H1 (cell line): ENCODE measurements at regions of chr19 and their contacts with region 1.

Region 1: GRCh38 chr19:53982611-53983010 is 8.8 kb upstream of the CACNG6 start:
- DNase-seq: peak in 1 of 2 experiments; percentile 66
- H3K4me3 ChIP-seq: peak overlapping the region in 2 of 4 experiments; percentile 18 to 35; a peak in 3 of 8 replicates
- H3K27ac ChIP-seq: no peak overlapping the region
- H3K4me1 ChIP-seq: peaks cover 4 to 13% (median 9%) of the 10 kb centered on the region in 4 experiments
- H3K27me3 ChIP-seq: peaks cover 0 to 5% (median 2%) of the 10 kb centered on the region in 4 experiments; a peak in 3 of 7 replicates
- CTCF ChIP-seq: no peak
- EP300 ChIP-seq: no peak
- POLR2A ChIP-seq: no peak
- RAD21 ChIP-seq: no peak

Region 2: GRCh38 chr19:53906211-53907192 is 76.1 kb before region 1 on chr19:
- CTCF ChIA-PET with region 1: interaction called, 4 read pairs
- POLR2A ChIA-PET with region 1: interaction called, 17 read pairs
- DNase-seq: peak in 1 of 2 experiments; percentile 97
- H3K4me3 ChIP-seq: peak overlapping the region; percentile 34 to 72 (median 44)
- H3K27ac ChIP-seq: no peak overlapping the region
- H3K4me1 ChIP-seq: peaks cover 0 to 14% (median 4%) of the 10 kb centered on the region in 4 experiments; a peak in 5 of 7 replicates
- H3K27me3 ChIP-seq: peaks cover 0 to 22% (median 14%) of the 10 kb centered on the region in 4 experiments; a peak in 5 of 7 replicates
- CTCF ChIP-seq: peak; percentile 72 to 97 (median 82)
- EP300 ChIP-seq: no peak
- POLR2A ChIP-seq: no peak
- RAD21 ChIP-seq: peak; percentile 68 to 75

Region 3: DNA sequence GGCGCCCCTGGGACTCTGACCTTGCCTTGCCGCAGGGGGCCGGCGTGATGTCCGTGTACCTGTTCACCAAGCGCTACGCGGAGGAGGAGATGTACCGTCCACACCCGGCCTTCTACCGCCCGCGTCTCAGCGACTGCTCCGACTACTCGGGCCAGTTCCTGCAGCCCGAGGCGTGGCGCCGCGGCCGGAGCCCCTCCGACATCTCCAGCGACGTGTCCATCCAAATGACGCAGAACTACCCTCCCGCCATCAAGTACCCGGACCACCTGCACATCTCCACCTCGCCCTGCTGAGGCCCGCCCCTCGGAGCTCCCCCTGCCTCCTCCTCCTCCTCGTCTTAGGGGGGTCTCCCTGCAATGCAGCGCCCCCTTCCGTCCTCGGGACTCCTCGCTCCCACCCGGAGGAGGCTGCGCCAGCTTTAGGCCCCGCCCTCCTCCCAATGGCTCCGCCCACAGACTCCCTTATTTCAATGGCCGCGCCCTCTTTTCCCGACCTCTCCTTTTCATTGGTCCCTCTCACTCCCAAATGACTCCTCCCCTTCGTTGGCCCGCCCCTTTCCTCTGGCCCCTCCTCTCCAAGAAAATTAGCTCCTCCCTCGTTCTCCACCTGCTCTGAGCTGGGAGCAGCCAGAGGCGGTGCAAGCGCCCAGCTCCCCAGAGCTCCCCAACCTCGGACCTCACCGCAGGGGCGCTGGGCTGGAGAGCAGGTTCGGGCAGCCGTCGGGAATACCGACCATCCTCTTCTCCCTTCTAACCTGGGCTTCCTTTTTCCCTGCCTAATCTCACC is 40.4 kb before region 1 on chr19:
- CTCF ChIA-PET with region 1: interaction called, 8 read pairs
- POLR2A ChIA-PET with region 1: interaction called, 15 read pairs
- DNase-seq: peak; percentile 97 to 100
- H3K4me3 ChIP-seq: peak overlapping the region; percentile 76 to 95 (median 88)
- H3K27ac ChIP-seq: peak overlapping the region; percentile 63; the same call in 1 of the 2 replicates
- H3K4me1 ChIP-seq: peaks cover 4 to 10% (median 7%) of the 10 kb centered on the region in 4 experiments; a peak in 6 of 7 replicates
- H3K27me3 ChIP-seq: no peaks in the 10 kb centered on the region
- CTCF ChIP-seq: peak; percentile 60 to 86 (median 82)
- EP300 ChIP-seq: no peak
- POLR2A ChIP-seq: peak; percentile 55 to 88
- RAD21 ChIP-seq: peak; percentile 46 to 65

Region 4: DNA sequence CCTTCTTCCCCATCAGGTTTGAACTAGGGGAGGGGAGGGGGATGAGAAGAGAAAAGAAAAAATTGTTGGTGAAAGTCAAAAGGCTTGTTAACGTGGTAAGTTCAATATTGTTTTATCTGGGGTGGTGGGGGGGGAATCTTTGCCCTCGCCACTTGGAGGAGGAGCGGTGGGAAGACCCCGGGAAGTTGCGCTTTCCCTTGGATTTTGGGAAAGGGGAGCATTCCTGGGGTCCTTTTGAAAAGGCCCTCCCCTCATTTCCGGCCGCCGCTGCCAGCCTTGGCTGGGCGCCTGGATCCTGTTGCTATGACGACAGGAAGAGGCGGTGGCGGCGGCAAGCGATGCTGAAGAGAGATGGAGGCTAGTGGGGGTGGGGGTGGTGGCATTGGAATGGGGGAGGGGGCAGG is 24.4 kb before region 1 on chr19:
- CTCF ChIA-PET with region 1: interaction called, 7 read pairs
- POLR2A ChIA-PET with region 1: interaction called, 41 read pairs
- DNase-seq: peak in 1 of 2 experiments; percentile 83
- H3K4me3 ChIP-seq: peak overlapping the region; percentile 17 to 61 (median 34); a peak in 7 of 8 replicates
- H3K27ac ChIP-seq: peak overlapping the region; percentile 83
- H3K4me1 ChIP-seq: peaks cover 7 to 20% (median 16%) of the 10 kb centered on the region in 4 experiments
- H3K27me3 ChIP-seq: peaks cover 0 to 3% (median 1%) of the 10 kb centered on the region in 4 experiments; a peak in 2 of 7 replicates
- CTCF ChIP-seq: no peak
- EP300 ChIP-seq: no peak
- POLR2A ChIP-seq: no peak
- RAD21 ChIP-seq: no peak

Region 5: GRCh38 chr19:53971673-53972072 is 10.9 kb before region 1 on chr19:
- CTCF ChIA-PET with region 1: interaction called, 4 read pairs
- POLR2A ChIA-PET with region 1: interaction called, 11 read pairs
- DNase-seq: no peak
- H3K4me3 ChIP-seq: no peak overlapping the region
- H3K27ac ChIP-seq: no peak overlapping the region
- H3K4me1 ChIP-seq: no peaks in the 10 kb centered on the region
- H3K27me3 ChIP-seq: no peaks in the 10 kb centered on the region
- CTCF ChIP-seq: no peak
- EP300 ChIP-seq: no peak
- POLR2A ChIP-seq: no peak
- RAD21 ChIP-seq: no peak

Region 6: DNA sequence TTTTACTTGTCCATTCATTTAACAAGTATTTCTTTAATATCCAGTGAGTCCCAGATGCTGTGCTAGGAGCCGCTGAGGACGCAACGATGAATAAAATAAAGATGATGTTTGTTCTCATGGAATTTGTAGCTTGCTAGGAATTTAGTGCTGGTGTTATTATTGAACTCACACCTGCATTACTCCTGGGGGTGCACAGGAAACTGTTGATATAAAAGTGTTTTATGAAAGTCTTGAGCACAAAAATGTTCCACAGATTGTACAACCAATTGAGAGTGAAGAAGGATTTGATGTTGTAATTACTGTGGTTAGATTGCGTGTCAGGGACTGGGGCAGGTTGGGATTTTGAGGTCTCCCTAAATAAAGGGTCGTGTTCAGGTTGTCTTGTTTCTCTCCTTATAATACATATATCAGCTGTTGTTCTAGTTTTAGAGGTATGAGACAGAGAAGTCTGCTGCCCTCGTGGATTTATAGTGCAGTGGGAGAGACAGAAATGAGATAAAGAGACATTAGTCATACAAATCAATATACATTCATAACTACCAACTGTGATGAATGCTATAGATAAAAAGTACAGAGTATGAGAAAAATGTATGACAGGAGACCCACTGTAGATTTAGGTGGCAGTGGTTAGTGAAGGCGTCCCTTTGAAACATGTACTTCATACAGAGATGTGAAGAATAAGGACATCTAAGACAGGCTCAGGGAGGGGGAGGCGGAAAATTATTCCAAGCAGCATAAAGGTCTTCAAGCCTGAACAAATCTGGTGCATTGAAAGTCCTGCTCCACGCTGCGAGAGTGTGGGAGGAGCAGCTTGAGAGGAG is 20.1 kb after region 1 on chr19:
- CTCF ChIA-PET with region 1: interaction called, 4 read pairs
- POLR2A ChIA-PET with region 1: interaction called, 13 read pairs
- DNase-seq: no peak
- H3K4me3 ChIP-seq: no peak overlapping the region
- H3K27ac ChIP-seq: no peak overlapping the region
- H3K4me1 ChIP-seq: peaks cover 0 to 6% (median 0%) of the 10 kb centered on the region in 4 experiments; a peak in 2 of 7 replicates
- H3K27me3 ChIP-seq: peaks cover 0 to 12% (median 3%) of the 10 kb centered on the region in 4 experiments; a peak in 4 of 7 replicates
- CTCF ChIP-seq: no peak
- EP300 ChIP-seq: no peak
- POLR2A ChIP-seq: no peak
- RAD21 ChIP-seq: no peak

Region 7: DNA sequence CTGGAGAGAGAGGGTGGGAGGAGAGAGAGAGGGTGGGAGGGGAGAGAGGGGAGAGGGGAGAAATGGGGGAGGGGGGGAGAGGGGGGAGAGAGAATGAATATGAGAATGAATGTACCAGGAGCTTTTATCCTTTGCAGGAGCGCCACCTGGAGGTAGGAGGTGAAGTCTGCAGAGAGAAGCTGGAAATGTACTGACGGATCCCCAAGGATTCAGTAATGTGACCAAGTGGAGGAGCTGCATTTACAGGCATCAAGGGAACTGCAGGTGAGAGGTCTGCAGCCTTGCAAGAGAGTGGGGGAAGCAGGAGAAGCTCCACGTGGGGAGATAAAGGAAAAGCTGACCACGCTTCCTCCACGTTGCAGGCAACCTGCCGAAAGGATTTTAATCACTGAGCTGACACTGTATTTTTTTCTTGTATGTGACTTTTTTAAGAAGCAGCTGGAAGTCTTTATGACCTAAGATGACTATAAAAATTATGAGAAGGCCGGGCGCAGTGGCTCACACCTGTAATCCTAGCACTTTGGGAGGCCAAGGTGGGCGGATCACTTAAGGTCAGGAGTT is 47.4 kb after region 1 on chr19:
- CTCF ChIA-PET with region 1: interaction called, 35 read pairs
- POLR2A ChIA-PET with region 1: interaction called, 17 read pairs
- DNase-seq: peak; percentile 50 to 86
- H3K4me3 ChIP-seq: no peak overlapping the region
- H3K27ac ChIP-seq: no peak overlapping the region
- H3K4me1 ChIP-seq: peaks cover 2 to 8% (median 4%) of the 10 kb centered on the region in 4 experiments; a peak in 6 of 7 replicates
- H3K27me3 ChIP-seq: no peaks in the 10 kb centered on the region
- CTCF ChIP-seq: peak; percentile 43 to 79 (median 75)
- EP300 ChIP-seq: no peak
- POLR2A ChIP-seq: no peak
- RAD21 ChIP-seq: peak; percentile 82 to 85